ENCODE measurements at regions of chr17 and their contacts with region 1.

Region 1: DNA sequence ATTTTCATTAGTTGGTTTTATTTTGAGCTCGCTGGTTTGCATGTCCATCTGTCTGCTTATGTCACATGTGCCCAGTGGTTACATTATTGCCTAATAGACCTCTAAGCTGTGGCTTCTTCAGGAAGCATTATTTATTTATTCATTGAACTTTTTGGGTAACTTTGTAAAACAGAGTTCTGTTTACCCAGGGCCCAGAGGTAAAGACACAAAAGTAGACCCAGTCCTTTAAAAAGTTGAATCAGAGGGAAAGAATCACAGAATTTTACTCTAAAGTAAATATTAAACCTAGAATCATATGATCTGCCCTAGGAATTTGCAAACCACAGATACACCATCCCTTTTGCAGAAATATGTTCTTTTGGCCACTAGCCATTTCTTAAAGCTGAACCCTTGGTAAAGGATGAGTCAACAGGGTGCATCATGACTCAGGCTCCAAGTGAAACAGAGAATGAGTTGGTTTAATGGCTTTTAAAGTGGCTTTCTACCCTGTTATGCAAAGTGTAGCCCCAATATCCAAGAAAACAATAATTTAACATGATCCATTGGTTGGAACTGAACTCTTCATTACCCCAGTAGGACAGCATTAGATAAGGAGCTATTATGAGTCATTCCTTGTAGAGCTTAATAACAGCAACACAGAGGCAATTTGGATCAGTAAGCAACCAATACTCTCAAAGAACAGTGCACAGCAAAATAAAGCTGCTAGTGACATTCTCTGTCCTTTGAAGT is 236.3 kb downstream of the KCNJ2 start:
- DNase-seq: peak; percentile 99
- ATAC-seq: peak; percentile 95
- H3K4me3 ChIP-seq: peak overlapping the region; percentile 33; the same call in 1 of the 2 replicates
- H3K27ac ChIP-seq: peak overlapping the region; percentile 72
- H3K4me1 ChIP-seq: peaks cover 24% of the 10 kb centered on the region
- H3K27me3 ChIP-seq: no peaks in the 10 kb centered on the region
- CTCF ChIP-seq: no peak

Region 2: GRCh38 chr17:69539781-69540319 is 865.8 kb before region 1 on chr17:
- CTCF ChIA-PET with region 1: no interaction called
- POLR2A ChIA-PET with region 1: no interaction called
- intact Hi-C with region 1: loop called (anchors 5 kb)
- DNase-seq: peak; percentile 96
- ATAC-seq: peak; percentile 91
- H3K4me3 ChIP-seq: peak overlapping the region; percentile 43
- H3K27ac ChIP-seq: peak overlapping the region; percentile 96
- H3K4me1 ChIP-seq: peaks cover 27% of the 10 kb centered on the region
- H3K27me3 ChIP-seq: no peaks in the 10 kb centered on the region
- CTCF ChIP-seq: no peak

Region 3: GRCh38 chr17:69779378-69780214 is 626.1 kb before region 1 on chr17:
- CTCF ChIA-PET with region 1: no interaction called
- POLR2A ChIA-PET with region 1: no interaction called
- intact Hi-C with region 1: loop called (anchors 2 kb)
- DNase-seq: peak; percentile 91
- ATAC-seq: peak; percentile 79
- H3K4me3 ChIP-seq: no peak overlapping the region
- H3K27ac ChIP-seq: peak overlapping the region; percentile 82
- H3K4me1 ChIP-seq: peaks cover 37% of the 10 kb centered on the region
- H3K27me3 ChIP-seq: no peaks in the 10 kb centered on the region
- CTCF ChIP-seq: no peak

Region 4: GRCh38 chr17:70184770-70185169 is 220.9 kb before region 1 on chr17:
- CTCF ChIA-PET with region 1: no interaction called
- POLR2A ChIA-PET with region 1: no interaction called
- intact Hi-C with region 1: loop called (anchors 5 kb)
- DNase-seq: peak; percentile 88
- ATAC-seq: peak; percentile 89
- H3K4me3 ChIP-seq: peak overlapping the region; percentile 36; the same call in 1 of the 2 replicates
- H3K27ac ChIP-seq: no peak overlapping the region
- H3K4me1 ChIP-seq: peaks cover 23% of the 10 kb centered on the region
- H3K27me3 ChIP-seq: no peaks in the 10 kb centered on the region
- CTCF ChIP-seq: no peak

Region 5: DNA sequence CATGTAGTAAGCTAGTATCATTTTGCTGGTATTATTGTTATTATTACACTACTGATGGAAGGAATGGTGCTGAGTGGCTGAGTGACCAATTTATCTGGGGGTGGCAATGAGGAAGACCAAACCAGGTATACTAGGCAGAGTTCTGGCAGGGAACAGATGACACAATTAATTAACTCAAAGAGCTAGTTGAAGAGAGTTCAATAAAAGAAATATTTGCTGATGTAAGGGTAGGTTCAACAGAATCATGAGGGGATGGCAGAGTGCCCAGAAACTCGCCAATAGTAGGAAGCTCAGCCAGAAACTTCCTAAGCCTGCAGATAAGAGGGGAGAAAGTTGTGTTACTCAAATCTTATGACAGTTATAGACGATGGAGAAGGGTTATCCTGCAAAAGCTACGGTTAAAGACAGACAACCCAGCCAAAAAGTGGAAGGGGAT is 116.2 kb after region 1 on chr17:
- CTCF ChIA-PET with region 1: no interaction called
- POLR2A ChIA-PET with region 1: no interaction called
- intact Hi-C with region 1: loop called (anchors 2 kb)
- DNase-seq: peak; percentile 31
- ATAC-seq: no peak
- H3K4me3 ChIP-seq: no peak overlapping the region
- H3K27ac ChIP-seq: no peak overlapping the region
- H3K4me1 ChIP-seq: peaks cover 17% of the 10 kb centered on the region
- H3K27me3 ChIP-seq: no peaks in the 10 kb centered on the region
- CTCF ChIP-seq: no peak

Region 6: DNA sequence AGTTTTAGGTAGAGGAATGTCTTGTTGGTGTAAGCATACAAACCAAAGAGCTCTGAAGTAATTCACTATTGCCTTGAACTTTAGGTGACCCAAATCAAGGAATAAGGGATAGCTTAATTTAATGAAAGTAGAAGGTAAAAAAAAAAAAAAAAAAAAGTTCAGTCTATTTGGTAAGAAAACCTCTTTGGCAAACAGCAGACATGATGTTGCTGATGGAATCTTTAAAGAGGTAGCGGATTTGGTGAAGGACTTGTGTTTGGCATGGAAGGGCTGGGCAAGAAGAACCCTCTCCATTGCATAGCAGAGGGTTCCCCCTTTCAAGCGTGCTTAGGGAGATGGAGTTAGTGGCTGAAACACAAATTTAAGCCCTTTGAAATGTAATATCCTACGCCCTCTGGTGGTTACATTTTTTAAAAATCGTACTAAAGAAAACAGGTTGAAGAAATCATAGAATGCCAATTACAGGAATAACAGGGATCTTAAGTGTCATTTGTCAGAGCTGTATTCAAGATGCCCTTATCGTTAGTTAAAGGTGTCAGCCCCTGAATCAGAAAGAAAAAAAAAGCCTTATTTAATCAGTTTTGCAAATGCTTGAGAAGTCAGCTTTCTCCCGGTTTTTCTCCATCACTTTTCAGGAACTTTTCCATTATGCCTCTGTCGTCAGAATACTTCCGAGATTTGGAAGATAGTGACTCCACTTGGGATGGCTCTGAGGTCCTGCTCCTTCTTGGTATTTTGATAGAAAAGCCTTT is 146.8 kb after region 1 on chr17:
- CTCF ChIA-PET with region 1: interaction called, 4 read pairs
- POLR2A ChIA-PET with region 1: no interaction called
- intact Hi-C with region 1: loop called (anchors 10 kb)
- DNase-seq: peak; percentile 80
- ATAC-seq: peak; percentile 78
- H3K4me3 ChIP-seq: no peak overlapping the region
- H3K27ac ChIP-seq: no peak overlapping the region
- H3K4me1 ChIP-seq: no peaks in the 10 kb centered on the region
- H3K27me3 ChIP-seq: no peaks in the 10 kb centered on the region
- CTCF ChIP-seq: peak; percentile 81

Region 7: DNA sequence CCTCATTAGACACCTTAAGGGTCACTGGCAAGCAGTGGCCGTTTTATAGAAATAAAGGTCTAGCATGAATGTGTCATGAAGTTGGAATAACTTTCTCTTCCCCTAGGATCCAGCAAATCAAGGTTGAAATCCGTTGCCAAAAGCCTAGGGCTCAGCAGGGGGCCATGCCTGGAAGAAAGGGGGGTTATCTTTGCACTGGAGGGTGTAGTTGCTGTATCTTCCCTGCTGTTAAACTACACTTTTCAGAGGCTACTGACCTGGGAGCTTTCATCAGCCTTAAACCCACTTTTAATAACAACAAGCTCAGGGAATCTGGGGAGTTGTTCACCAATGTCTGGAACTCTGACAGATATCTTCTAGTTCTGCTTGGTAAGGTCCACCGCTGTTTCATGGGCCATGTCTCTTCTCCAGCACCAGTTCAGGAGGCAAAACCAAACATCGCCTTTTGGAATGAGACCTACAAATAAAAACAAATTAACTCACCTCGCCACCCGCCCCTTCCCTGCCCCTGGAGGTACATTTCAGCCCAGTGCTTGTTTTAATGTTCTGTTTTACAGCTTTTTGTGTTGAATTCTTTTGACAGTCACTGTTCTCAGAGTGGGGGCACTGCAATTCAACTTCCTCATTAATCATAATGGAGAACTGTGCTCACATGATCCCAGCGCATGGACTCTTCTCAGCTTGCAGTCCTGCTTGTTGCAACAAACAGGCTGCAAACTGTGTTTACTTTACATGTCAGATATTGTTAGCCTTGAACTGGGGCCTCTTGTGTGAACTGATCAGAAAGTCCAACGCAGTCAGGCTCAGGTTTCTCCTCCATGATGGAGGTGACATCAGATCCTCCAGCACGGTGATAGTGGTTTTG is 272.4 kb after region 1 on chr17:
- CTCF ChIA-PET with region 1: no interaction called
- POLR2A ChIA-PET with region 1: no interaction called
- intact Hi-C with region 1: no loop called
- DNase-seq: no peak
- ATAC-seq: no peak
- H3K4me3 ChIP-seq: no peak overlapping the region
- H3K27ac ChIP-seq: no peak overlapping the region
- H3K4me1 ChIP-seq: no peaks in the 10 kb centered on the region
- H3K27me3 ChIP-seq: peaks cover 95% of the 10 kb centered on the region
- CTCF ChIP-seq: no peak